ENCODE measurements at regions of chr11 and their contacts with region 1.

Region 1: DNA sequence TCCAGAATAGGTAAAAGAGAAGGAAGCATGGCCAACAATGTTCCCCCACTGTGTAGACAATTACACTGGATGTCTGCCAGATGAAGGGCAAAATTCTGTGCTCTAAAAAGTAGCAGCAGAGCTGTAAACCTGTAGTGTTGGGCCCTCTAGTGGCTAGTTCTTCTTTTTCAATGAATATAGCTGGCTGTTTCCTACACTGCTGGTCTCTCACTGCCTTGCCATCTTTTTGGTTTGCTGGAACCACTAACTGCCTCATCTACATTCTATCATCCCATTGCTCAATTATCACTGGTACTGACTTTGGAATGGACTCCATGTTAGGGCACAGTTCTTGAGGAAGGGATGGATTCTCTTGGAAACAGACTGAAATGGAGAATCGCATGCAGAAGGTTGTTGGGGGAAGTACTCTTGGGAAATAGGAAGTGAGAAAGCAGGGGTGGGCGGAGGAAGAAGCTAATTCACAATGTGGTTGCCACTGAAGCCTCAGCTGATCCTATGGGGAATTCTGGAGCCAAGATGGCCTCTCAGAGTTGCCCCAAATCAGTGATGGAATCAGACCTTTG is 17.9 kb downstream of the KCNE3 start:
- DNase-seq: peak; percentile 55 to 57
- H3K4me3 ChIP-seq: no peak overlapping the region
- H3K27ac ChIP-seq: peak overlapping the region in 1 of 3 donors; percentile 30
- H3K4me1 ChIP-seq: peaks cover 3 to 4% of the 10 kb centered on the region in 2 donors
- H3K27me3 ChIP-seq: no peaks in the 10 kb centered on the region
- CTCF ChIP-seq: peak; percentile 45 to 89 (median 72)
- POLR2A ChIP-seq: no peak

Region 2: DNA sequence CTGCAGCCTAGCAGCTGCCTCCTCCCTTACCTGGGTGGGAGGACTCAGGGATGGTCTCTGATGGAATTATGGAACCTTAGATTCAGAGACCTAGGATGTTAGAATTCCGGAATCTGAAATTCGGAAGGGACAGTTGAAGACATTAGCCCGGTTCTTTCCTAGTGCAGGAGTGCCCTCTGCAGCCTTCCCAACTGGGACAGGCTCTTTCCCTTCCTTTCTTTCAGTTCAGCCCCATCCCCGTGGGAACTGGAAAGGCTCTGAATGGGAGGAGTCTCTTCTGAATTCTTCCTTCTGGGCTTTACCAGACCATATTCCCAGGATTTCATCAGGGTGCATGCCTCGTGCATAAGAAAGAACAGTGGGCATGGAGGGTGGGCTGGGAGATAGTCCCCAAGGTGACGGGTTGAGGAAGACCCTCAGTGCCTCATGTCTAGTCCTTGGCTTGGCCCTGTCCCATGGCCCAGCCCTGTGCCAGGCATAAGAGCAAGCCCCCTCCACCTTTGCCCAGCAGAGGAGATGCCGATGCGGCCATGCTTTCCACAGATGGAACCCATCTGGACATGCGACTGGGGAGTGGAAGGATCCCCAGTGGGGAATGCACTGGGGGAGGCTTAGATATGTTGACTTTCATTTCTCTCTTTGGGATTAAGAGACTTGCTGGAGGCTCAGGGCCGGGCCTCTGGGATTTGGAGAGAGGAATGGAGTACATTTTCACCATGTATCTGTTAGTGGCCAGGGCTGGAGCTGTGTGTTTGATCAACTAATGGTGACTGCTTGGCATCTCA is 484.2 kb before region 1 on chr11:
- intact Hi-C with region 1: loop called (anchors 5 kb)
- DNase-seq: no peak
- H3K4me3 ChIP-seq: no peak overlapping the region
- H3K27ac ChIP-seq: no peak overlapping the region
- H3K4me1 ChIP-seq: peaks cover 0 to 8% of the 10 kb centered on the region in 2 donors
- H3K27me3 ChIP-seq: no peaks in the 10 kb centered on the region
- CTCF ChIP-seq: no peak
- POLR2A ChIP-seq: no peak

Region 3: GRCh38 chr11:74169736-74170449 is 279.6 kb before region 1 on chr11:
- intact Hi-C with region 1: no loop called
- DNase-seq: no peak
- H3K4me3 ChIP-seq: peak overlapping the region; percentile 29 to 66 (median 58)
- H3K27ac ChIP-seq: peak overlapping the region in 2 of 3 donors; percentile 83 to 90
- H3K4me1 ChIP-seq: peaks cover 24 to 27% of the 10 kb centered on the region in 2 donors
- H3K27me3 ChIP-seq: no peaks in the 10 kb centered on the region
- CTCF ChIP-seq: no peak
- POLR2A ChIP-seq: no peak

Region 4: DNA sequence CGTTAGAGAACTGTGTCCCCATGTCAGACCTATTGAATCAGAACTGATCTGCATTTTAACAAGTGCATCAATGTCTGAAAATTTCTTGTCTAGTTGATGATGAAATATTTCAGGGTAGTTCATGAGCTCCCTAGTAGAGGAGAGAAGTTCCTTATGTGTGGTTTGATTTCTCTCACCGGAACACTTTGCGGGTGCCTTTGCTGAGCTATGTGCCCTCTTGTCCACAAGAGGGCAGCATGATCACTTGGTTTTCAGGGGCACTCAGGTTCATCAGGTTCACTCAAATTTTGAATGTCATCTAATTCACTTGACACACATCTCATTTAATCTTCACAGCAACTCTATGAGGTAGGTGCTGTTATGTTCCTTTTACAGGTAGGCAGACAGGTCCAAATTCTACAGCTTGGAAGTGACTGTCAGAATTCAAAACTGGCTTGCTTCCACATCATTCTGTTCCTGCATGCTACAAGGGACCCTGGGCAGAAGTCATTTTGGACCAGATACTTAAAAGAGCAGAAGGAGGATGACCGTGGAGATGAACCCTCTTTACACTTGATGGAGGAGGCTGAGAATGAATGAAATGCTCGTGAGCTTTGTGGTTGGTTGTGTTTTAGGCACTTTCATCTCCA is 193.6 kb before region 1 on chr11:
- intact Hi-C with region 1: loop called (anchors 2 kb)
- DNase-seq: peak; percentile 65 to 70
- H3K4me3 ChIP-seq: no peak overlapping the region
- H3K27ac ChIP-seq: no peak overlapping the region
- H3K4me1 ChIP-seq: peaks cover 16 to 31% of the 10 kb centered on the region in 2 donors
- H3K27me3 ChIP-seq: no peaks in the 10 kb centered on the region
- CTCF ChIP-seq: peak; percentile 83 to 92 (median 88)
- POLR2A ChIP-seq: no peak

Region 5: DNA sequence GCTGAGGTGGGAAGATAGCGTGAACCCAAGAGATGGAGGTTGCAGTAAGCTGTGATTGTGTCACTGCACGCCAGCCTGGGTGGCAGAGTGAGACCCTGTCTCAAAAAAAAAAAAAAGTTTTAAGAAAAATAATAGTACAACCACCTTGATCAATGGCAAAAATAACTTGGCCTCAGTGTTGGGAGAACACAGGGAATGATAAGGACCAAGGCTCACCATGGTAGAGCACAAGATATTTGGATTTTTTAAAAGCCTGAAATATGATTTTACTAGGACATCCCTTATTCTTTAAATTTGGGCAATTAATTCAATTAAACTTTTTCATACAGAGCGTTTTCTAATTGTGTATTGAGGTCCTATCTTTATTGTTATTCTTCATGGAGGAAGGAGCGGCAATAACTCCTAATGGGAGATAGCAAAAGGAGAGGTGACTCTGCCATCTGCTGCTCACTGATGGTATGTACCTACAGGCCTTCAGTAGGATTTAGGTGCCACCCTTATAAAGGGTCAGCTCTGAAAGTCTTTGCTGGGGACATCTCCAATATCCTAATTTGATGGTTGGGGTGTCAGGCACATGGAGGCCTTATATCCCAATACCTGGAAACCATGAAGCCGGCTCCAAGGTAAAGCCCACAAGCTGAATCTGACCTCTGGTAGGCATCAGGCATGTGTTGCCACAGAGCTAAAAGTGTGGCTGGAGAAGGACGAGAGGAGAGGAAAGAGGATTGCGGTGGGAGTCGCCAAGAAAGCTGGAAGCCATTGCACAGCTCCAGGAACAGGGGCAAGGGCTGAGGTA is 121.0 kb after region 1 on chr11:
- intact Hi-C with region 1: loop called (anchors 2 kb)
- DNase-seq: peak; percentile 56 to 57
- H3K4me3 ChIP-seq: no peak overlapping the region
- H3K27ac ChIP-seq: no peak overlapping the region
- H3K4me1 ChIP-seq: no peaks in the 10 kb centered on the region
- H3K27me3 ChIP-seq: no peaks in the 10 kb centered on the region
- CTCF ChIP-seq: peak; percentile 31 to 87 (median 76)
- POLR2A ChIP-seq: no peak